Caco-2 (cell line): ENCODE measurements at regions of chr12 and their contacts with region 1.

Region 1: GRCh38 chr12:12704593-12705230 is 8.7 kb upstream of the GPR19 start:
- DNase-seq: peak; percentile 83 to 86
- H3K4me3 ChIP-seq: no peak overlapping the region
- H3K4me3 Mint-ChIP-seq: no peak overlapping the region
- H3K27ac Mint-ChIP-seq: no peak overlapping the region
- H3K4me1 ChIP-seq: peaks cover 12% of the 10 kb centered on the region
- H3K4me1 Mint-ChIP-seq: peaks cover 15% of the 10 kb centered on the region
- H3K27me3 ChIP-seq: no peaks in the 10 kb centered on the region
- H3K27me3 Mint-ChIP-seq: no peaks in the 10 kb centered on the region
- CTCF ChIP-seq: peak; percentile 98

Region 2: DNA sequence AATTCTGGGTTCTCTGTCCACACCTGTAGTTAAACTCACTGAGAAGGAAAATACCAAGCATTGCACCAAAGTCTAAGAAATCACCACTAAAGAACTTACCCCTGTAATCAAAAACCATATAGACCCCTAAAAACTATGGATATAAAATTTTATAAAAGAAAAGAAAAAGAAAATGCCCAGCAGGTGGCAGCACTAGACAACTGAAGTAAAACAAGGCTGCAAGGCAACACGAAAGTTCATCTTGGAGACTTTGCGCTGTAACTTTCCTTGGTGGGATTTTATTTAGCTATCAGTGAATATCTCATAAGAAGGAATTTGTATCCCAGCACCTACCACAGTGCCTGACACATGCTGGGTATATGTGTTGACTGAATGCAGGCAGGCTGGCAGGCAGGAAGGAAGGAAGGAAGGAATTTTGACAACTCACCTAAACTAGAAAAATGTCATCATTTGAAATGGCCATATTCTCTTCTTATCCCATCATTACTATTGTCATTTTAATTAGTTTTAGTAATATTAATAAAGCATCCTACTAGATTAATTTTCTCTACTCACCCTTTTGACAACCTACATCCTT is 1123.4 kb before region 1 on chr12:
- CTCF ChIA-PET with region 1: no interaction called
- POLR2A ChIA-PET with region 1: no interaction called
- intact Hi-C with region 1: loop called (anchors 10 kb)
- DNase-seq: peak; percentile 59 to 76
- H3K4me3 ChIP-seq: no peak overlapping the region
- H3K4me3 Mint-ChIP-seq: no peak overlapping the region
- H3K27ac Mint-ChIP-seq: no peak overlapping the region
- H3K4me1 ChIP-seq: no peaks in the 10 kb centered on the region
- H3K4me1 Mint-ChIP-seq: no peaks in the 10 kb centered on the region
- H3K27me3 ChIP-seq: no peaks in the 10 kb centered on the region
- H3K27me3 Mint-ChIP-seq: peaks cover 12% of the 10 kb centered on the region
- CTCF ChIP-seq: peak; percentile 66 to 94

Region 3: GRCh38 chr12:12081836-12082497 is 622.7 kb before region 1 on chr12:
- CTCF ChIA-PET with region 1: no interaction called
- POLR2A ChIA-PET with region 1: no interaction called
- intact Hi-C with region 1: loop called (anchors 1 kb)
- DNase-seq: peak; percentile 62 to 67
- H3K4me3 ChIP-seq: no peak overlapping the region
- H3K4me3 Mint-ChIP-seq: no peak overlapping the region
- H3K27ac Mint-ChIP-seq: peak overlapping the region; percentile 29
- H3K4me1 ChIP-seq: peaks cover 10% of the 10 kb centered on the region; the same call in 1 of the 2 replicates
- H3K4me1 Mint-ChIP-seq: peaks cover 15% of the 10 kb centered on the region
- H3K27me3 ChIP-seq: no peaks in the 10 kb centered on the region
- H3K27me3 Mint-ChIP-seq: no peaks in the 10 kb centered on the region
- CTCF ChIP-seq: peak; percentile 37 to 42

Region 4: DNA sequence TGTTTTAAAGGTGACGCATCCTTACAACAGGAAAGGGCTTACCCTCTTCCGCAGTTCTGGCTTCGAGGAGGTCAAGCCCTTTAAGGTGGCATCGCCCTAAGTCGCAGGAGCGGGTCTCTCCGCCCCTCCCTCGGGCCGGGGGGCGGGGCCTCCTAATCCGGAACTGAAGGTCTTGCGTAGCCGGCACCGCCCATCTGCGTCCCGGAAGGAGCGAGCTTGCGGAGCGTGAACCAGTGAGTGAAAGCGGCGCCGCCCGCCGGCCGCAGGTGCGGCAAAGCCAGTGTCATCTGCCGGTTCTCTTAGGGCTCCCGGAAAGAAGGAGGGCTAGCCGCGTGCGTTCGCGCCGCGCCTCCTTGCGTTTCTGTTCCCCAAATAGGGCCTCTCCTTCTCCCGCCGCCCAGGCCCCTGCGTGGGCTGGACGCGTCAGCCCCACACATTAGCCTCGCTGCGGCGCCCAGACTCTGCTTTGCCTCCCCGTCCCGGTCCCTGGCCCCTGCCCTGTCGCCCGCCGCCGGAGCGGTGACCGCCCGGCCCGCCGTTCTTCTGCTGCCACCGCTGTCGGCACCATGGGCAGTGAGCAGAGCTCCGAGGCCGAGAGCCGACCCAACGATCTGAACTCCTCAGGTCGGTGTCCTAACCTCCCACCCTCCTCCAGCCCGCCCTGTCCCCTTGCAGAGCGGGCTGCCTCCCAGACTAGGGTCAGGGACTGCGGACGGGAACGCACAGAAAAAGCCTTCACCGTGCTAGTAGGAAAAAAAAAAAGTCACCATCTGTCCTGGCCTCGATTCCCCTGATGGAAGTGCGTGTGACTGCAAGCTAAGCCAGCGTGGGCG is 347.6 kb before region 1 on chr12 and contains the start of gene BORCS5:
- CTCF ChIA-PET with region 1: interaction called, 3 read pairs
- POLR2A ChIA-PET with region 1: interaction called, 7 read pairs
- intact Hi-C with region 1: loop called (anchors 5 kb)
- DNase-seq: peak; percentile 99
- H3K4me3 ChIP-seq: peak within 1 kb of the TSS; percentile 86
- H3K4me3 Mint-ChIP-seq: peak within 1 kb of the TSS; percentile 94
- H3K27ac Mint-ChIP-seq: peak within 1 kb of the TSS; percentile 96
- H3K4me1 ChIP-seq: peaks cover 7% of the 10 kb centered on the region; the same call in 1 of the 2 replicates
- H3K4me1 Mint-ChIP-seq: peaks cover 12% of the 10 kb centered on the region
- H3K27me3 ChIP-seq: no peaks in the 10 kb centered on the region
- H3K27me3 Mint-ChIP-seq: no peaks in the 10 kb centered on the region
- CTCF ChIP-seq: peak in 1 of 2 experiments; percentile 43
- total RNA-seq, gene BORCS5: 25.5 and 25.7 TPM in 2 replicates

Region 5: DNA sequence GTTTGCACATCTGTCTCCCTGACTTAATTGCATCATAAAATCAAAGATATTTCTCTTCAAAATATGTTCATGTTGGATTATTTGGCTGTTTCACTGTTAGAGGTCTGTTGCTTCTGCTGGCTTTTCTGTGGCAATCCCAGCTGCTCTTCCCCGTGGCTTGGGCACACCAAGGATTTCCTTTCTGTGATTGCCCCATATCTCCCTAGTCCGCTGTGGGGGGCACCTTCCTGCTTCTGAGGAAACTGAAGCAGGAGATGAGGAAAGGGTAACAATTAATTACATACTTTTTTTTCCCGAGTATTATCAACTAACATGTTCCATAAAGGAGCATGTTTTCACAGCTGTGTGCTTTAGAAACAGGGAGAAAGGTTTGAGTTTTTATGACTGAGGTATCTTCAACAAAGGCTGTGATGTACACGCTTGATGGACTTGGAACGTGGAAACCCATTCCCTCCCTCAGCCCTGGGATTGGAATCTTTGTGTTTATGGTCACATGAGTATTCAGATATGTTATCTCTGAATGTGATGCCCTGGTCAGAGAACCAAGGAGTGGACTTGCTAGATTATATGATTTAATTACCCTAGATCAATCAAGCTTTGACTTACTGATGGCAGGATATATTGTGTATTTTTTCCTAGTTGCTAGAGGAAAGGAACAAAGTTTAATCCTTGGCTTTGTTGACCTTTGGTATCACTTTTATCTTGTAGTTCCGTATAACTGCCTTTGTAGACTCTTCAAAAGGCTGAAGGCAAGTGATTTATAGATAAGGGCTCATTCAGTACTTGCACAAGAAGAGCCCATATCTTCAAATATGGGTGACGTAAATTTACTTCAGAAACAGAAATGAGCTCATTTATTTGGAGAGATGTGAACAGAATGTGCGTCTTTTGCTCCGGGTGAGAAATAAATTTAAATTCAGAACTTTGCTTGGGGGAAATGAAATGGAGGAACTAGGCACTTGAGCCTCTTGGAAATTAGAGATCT is 301.2 kb before region 1 on chr12:
- CTCF ChIA-PET with region 1: no interaction called
- POLR2A ChIA-PET with region 1: interaction called, 3 read pairs
- intact Hi-C with region 1: loop called (anchors 1 kb)
- DNase-seq: peak; percentile 96 to 97
- H3K4me3 ChIP-seq: no peak overlapping the region
- H3K4me3 Mint-ChIP-seq: peak overlapping the region; percentile 54
- H3K27ac Mint-ChIP-seq: peak overlapping the region; percentile 94
- H3K4me1 ChIP-seq: peaks cover 61% of the 10 kb centered on the region
- H3K4me1 Mint-ChIP-seq: peaks cover 60% of the 10 kb centered on the region
- H3K27me3 ChIP-seq: no peaks in the 10 kb centered on the region
- H3K27me3 Mint-ChIP-seq: no peaks in the 10 kb centered on the region
- CTCF ChIP-seq: no peak

Region 6: GRCh38 chr12:12611512-12612306 is 93.0 kb before region 1 on chr12 and contains the start of gene CREBL2:
- CTCF ChIA-PET with region 1: interaction called, 3 read pairs
- POLR2A ChIA-PET with region 1: no interaction called
- intact Hi-C with region 1: loop called (anchors 2 kb)
- DNase-seq: peak; percentile 96
- H3K4me3 ChIP-seq: peak within 1 kb of the TSS; percentile 66
- H3K4me3 Mint-ChIP-seq: peak within 1 kb of the TSS; percentile 89
- H3K27ac Mint-ChIP-seq: peak within 1 kb of the TSS; percentile 57
- H3K4me1 ChIP-seq: peaks cover 11% of the 10 kb centered on the region
- H3K4me1 Mint-ChIP-seq: peaks cover 24% of the 10 kb centered on the region
- H3K27me3 ChIP-seq: no peaks in the 10 kb centered on the region
- H3K27me3 Mint-ChIP-seq: no peaks in the 10 kb centered on the region
- CTCF ChIP-seq: no peak
- total RNA-seq, gene CREBL2: 25.0 and 26.3 TPM in 2 replicates

Region 7: GRCh38 chr12:12661086-12661485 is 43.6 kb before region 1 on chr12:
- CTCF ChIA-PET with region 1: no interaction called
- POLR2A ChIA-PET with region 1: no interaction called
- intact Hi-C with region 1: loop called (anchors 1 kb)
- DNase-seq: no peak
- H3K4me3 ChIP-seq: no peak overlapping the region
- H3K4me3 Mint-ChIP-seq: no peak overlapping the region
- H3K27ac Mint-ChIP-seq: no peak overlapping the region
- H3K4me1 ChIP-seq: no peaks in the 10 kb centered on the region
- H3K4me1 Mint-ChIP-seq: no peaks in the 10 kb centered on the region
- H3K27me3 ChIP-seq: no peaks in the 10 kb centered on the region
- H3K27me3 Mint-ChIP-seq: no peaks in the 10 kb centered on the region
- CTCF ChIP-seq: no peak

Region 8: DNA sequence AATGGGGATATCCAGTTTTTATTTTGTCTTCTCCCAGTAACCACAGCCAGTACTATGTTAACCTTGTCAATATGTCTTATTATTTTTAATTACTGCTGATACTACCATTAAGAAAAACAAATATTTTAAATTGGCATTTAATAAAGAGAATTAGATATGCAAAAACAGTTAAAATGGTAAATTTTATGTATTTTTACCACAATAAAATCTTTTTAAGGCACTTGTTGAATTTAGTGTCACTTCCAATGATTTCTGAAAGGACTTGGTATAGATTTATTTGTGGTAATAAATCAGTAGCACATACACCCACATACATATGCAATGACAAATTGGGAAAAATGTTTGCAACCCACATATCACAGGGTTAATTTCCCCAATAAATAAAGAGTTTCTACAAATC is 26.5 kb after region 1 on chr12:
- CTCF ChIA-PET with region 1: no interaction called
- POLR2A ChIA-PET with region 1: no interaction called
- intact Hi-C with region 1: no loop called
- DNase-seq: no peak
- H3K4me3 ChIP-seq: no peak overlapping the region
- H3K4me3 Mint-ChIP-seq: no peak overlapping the region
- H3K27ac Mint-ChIP-seq: no peak overlapping the region
- H3K4me1 ChIP-seq: peaks cover 4% of the 10 kb centered on the region
- H3K4me1 Mint-ChIP-seq: peaks cover 20% of the 10 kb centered on the region
- H3K27me3 ChIP-seq: no peaks in the 10 kb centered on the region
- H3K27me3 Mint-ChIP-seq: no peaks in the 10 kb centered on the region
- CTCF ChIP-seq: no peak

Region 9: DNA sequence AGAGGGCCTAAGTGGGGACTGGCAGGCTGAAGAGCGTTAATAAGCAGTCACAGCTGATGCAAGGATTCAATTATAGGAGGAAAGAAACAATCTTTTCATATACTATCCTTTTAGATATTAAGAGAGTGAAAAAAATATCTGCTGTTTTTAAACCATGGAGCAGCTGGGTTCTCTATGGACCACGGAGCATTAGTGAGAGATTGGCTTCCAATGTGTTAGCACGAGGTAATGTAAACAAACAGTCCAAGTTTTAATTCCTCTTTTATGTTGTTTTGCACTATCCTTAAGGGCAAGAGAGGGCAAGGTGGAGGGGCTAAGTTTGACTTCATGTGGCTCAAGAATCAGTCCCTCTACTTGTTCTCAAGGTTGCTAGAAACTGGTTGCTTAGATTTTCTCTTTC is 43.3 kb after region 1 on chr12:
- CTCF ChIA-PET with region 1: no interaction called
- POLR2A ChIA-PET with region 1: no interaction called
- intact Hi-C with region 1: no loop called
- DNase-seq: no peak
- H3K4me3 ChIP-seq: no peak overlapping the region
- H3K4me3 Mint-ChIP-seq: no peak overlapping the region
- H3K27ac Mint-ChIP-seq: no peak overlapping the region
- H3K4me1 ChIP-seq: no peaks in the 10 kb centered on the region
- H3K4me1 Mint-ChIP-seq: peaks cover 14% of the 10 kb centered on the region
- H3K27me3 ChIP-seq: no peaks in the 10 kb centered on the region
- H3K27me3 Mint-ChIP-seq: no peaks in the 10 kb centered on the region
- CTCF ChIP-seq: no peak